AG04450 (cell line): ENCODE measurements at regions of chr7 and their contacts with region 1.

Region 1: DNA sequence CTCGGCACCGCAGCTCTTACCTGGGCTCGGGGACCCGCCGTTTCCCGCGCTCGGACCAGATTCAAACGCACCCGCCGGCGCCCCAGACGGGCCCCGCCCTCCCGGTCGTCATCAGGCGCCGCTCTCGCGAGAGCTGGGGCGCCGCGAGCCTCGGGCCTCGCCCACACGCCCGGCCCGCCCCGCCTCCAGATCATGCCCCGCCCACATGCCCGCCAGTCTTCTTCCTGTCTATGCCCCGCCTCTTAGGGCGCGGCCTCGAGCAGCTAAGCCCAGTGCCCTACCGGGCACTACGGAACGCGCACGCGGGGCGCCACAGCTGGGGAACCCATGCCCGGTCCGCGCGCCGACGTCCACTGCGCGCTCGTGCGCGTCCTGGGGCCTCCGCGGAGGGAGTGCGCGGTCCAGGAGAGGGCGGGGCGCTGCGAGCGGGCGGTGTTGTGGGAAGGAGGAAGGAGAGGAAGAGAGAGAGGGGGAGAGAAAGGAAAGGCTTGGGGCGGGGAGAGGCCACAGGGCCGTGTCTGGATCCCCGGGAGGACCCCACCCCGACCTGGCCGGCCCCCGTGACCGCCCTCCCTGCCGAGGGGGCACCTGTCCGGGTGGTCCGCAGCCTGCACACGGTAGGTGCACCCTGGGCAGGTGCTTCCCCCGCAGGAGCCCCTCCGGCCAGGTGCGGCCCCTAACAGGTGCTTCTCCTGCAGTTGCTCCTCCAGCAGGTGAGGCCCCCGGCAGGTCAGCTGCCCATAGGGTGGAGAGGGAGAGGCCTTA is at the start of gene NCAPG2:
- DNase-seq: peak; percentile 95
- H3K4me3 ChIP-seq: peak within 1 kb of the TSS; percentile 93
- H3K27ac ChIP-seq: peak within 1 kb of the TSS; percentile 31
- H3K27me3 ChIP-seq: no peaks in the 10 kb centered on the region
- CTCF ChIP-seq: peak; percentile 6; the same call in 1 of the 2 replicates
- polyA plus RNA-seq, gene NCAPG2: 12.3 and 14.8 TPM in 2 replicates

Region 2: DNA sequence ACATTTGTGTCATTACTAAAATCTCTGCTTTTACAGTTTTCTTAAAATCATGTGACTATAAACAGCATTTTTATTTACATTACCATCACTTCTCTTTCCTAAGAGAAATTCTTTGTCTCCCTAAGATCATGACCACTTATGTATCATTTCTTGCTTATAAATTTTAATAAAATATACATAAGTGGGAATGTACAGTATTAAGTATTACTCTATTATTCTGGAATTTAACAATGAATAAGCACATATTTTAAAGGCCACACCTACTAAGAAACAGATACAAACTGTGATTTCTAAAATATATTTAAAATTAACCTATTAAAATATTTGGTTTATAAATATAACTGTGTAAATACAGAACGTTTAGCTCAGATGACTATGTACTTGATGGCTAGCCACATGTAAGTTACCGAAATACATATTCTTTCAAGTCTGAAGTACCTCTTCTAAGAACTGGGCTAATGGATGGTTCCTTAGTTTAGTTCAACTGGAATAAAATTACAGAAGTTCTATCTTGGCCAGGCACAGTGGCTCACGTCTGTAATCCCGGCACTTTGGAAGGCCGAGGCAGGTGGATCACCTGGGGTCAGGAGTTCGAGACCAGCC is 83.9 kb before region 1 on chr7:
- CTCF ChIA-PET with region 1: no interaction called
- POLR2A ChIA-PET with region 1: no interaction called
- DNase-seq: no peak
- H3K4me3 ChIP-seq: no peak overlapping the region
- H3K27ac ChIP-seq: no peak overlapping the region
- H3K27me3 ChIP-seq: no peaks in the 10 kb centered on the region
- CTCF ChIP-seq: no peak

Region 3: DNA sequence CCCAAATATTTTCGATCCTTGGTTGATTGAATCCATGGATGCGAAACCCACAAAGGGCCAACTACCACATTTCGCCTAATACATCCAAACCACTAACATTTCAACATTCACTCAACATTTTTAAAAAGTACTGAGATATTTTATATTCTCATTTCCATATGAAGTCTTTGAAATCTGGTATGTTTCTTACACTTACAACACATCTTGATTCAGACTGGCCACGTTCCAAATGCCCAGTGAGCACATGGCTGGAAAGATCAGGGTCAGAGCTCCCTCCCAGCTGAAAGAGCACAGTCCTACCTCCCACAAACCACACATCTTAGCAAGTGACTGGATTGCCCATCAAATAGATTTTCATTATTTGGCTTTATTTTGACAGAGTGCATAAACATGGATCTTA is 19.2 kb before region 1 on chr7:
- CTCF ChIA-PET with region 1: no interaction called
- POLR2A ChIA-PET with region 1: no interaction called
- DNase-seq: no peak
- H3K4me3 ChIP-seq: no peak overlapping the region
- H3K27ac ChIP-seq: no peak overlapping the region
- H3K27me3 ChIP-seq: no peaks in the 10 kb centered on the region
- CTCF ChIP-seq: no peak

Region 4: DNA sequence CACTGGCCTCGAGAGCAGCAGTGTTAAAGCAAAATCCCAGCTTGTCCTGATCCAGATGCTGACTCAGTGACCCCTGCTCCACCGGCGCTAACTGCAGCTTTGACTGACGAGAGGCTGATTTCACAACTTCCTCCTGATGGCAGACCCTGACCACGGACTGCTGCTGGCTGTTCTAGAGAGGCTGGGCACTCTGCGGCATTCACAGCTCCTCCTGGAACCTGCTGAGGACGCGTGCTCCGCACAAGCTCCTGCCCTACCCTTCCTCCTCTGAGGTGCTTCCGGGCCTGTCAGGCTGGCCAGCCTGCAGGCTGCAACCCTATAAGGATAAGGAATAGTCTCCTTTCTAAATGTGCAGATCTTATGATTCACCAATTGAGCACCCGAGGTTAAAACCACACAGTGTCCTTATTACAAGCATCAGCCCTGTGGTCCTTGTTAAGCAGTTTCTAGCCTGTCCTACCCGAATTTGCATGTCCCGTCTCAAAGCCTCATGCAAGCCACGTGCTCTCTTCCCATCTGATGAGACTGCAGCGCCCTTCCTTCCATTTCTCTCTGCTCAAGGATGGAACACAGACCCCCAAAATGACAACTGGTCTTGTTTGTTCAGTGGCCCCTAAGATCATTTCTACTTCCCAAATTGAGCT is 35.2 kb after region 1 on chr7:
- CTCF ChIA-PET with region 1: interaction called, 4 read pairs
- POLR2A ChIA-PET with region 1: interaction called, 16 read pairs
- DNase-seq: peak; percentile 68
- H3K4me3 ChIP-seq: peak overlapping the region; percentile 7
- H3K27ac ChIP-seq: peak overlapping the region; percentile 95
- H3K27me3 ChIP-seq: no peaks in the 10 kb centered on the region
- CTCF ChIP-seq: no peak

Region 5: GRCh38 chr7:158863611-158864506 is 159.0 kb after region 1 on chr7:
- CTCF ChIA-PET with region 1: interaction called, 4 read pairs
- POLR2A ChIA-PET with region 1: interaction called, 10 read pairs
- DNase-seq: no peak
- H3K4me3 ChIP-seq: peak overlapping the region; percentile 61
- H3K27ac ChIP-seq: no peak overlapping the region
- H3K27me3 ChIP-seq: no peaks in the 10 kb centered on the region
- CTCF ChIP-seq: no peak

Region 6: GRCh38 chr7:158957921-158958491 is 253.1 kb after region 1 on chr7:
- CTCF ChIA-PET with region 1: no interaction called
- POLR2A ChIA-PET with region 1: interaction called, 17 read pairs
- DNase-seq: no peak
- H3K4me3 ChIP-seq: no peak overlapping the region
- H3K27ac ChIP-seq: no peak overlapping the region
- H3K27me3 ChIP-seq: peaks cover 17% of the 10 kb centered on the region
- CTCF ChIP-seq: no peak